CD8-positive, alpha-beta memory T cell (primary cell): ENCODE measurements at regions of chr12 and their contacts with region 1.

Region 1: DNA sequence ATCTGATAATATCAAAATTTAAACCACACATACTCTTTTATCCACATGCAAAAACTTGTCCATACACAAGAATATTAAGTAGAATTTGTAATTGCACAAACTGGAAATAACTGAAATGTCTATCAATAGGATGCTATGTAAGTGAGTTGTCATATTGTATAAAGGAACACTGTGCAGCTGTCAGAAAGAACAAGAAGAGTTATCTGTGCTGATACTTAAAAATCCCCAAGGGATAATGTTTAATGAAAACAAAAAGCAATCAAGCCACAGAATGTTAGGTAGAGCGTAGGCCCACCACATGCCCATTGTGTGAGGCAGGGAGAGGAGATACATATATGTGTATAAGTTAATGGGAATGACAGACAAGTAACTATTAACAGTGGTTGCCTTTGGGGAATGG is 25.9 kb upstream of the HIGD1C start:
- DNase-seq: no peak
- H3K4me3 ChIP-seq: no peak overlapping the region
- H3K4me3 Mint-ChIP-seq: peak overlapping the region in 6 of 7 donors; percentile 24 to 92 (median 84)
- H3K27ac ChIP-seq: no peak overlapping the region
- H3K27ac Mint-ChIP-seq: peak overlapping the region in 5 of 8 donors; percentile 1 to 47 (median 12)
- H3K4me1 ChIP-seq: peaks cover 15% of the 10 kb centered on the region
- H3K4me1 Mint-ChIP-seq: peaks cover 33 to 63% (median 34%) of the 10 kb centered on the region in 3 donors
- H3K27me3 ChIP-seq: no peaks in the 10 kb centered on the region
- H3K27me3 Mint-ChIP-seq: peaks cover 0 to 3% of the 10 kb centered on the region in 2 donors

Region 2: GRCh38 chr12:50401365-50402081 is 524.9 kb before region 1 on chr12:
- CTCF ChIA-PET with region 1: no interaction called
- POLR2A ChIA-PET with region 1: interaction called, 10 read pairs
- DNase-seq: peak in 1 of 5 donors; percentile 2
- H3K4me3 ChIP-seq: peak overlapping the region; percentile 97
- H3K4me3 Mint-ChIP-seq: peak overlapping the region; percentile 90 to 100 (median 98)
- H3K27ac ChIP-seq: peak overlapping the region; percentile 87
- H3K27ac Mint-ChIP-seq: peak overlapping the region; percentile 83 to 98 (median 96)
- H3K4me1 ChIP-seq: peaks cover 19% of the 10 kb centered on the region
- H3K4me1 Mint-ChIP-seq: peaks cover 33 to 50% (median 36%) of the 10 kb centered on the region in 3 donors
- H3K27me3 ChIP-seq: no peaks in the 10 kb centered on the region
- H3K27me3 Mint-ChIP-seq: peaks cover 3 to 5% of the 10 kb centered on the region in 2 donors